Natural killer cell (primary cell): ENCODE measurements at regions of chr7 and their contacts with region 1.

Region 1: GRCh38 chr7:107879400-107880035 is 11.5 kb upstream of the DLD start:
- DNase-seq: peak in 1 of 2 donors; percentile 73
- ATAC-seq: peak; percentile 79 to 84 (median 83)
- H3K4me3 ChIP-seq: no peak overlapping the region
- H3K4me3 Mint-ChIP-seq: no peak overlapping the region
- H3K27ac ChIP-seq: no peak overlapping the region
- H3K27ac Mint-ChIP-seq: no peak overlapping the region
- H3K4me1 ChIP-seq: no peaks in the 10 kb centered on the region
- H3K4me1 Mint-ChIP-seq: peaks cover 0 to 2% of the 10 kb centered on the region in 2 donors
- H3K27me3 ChIP-seq: no peaks in the 10 kb centered on the region
- H3K27me3 Mint-ChIP-seq: peaks cover 18 to 32% of the 10 kb centered on the region in 2 donors
- CTCF ChIP-seq: peak; percentile 78

Region 2: GRCh38 chr7:106793015-106793975 is 1086.2 kb before region 1 on chr7:
- intact Hi-C with region 1: loop called (anchors 10 kb)
- DNase-seq: peak in 1 of 2 donors; percentile 82
- ATAC-seq: peak; percentile 57 to 73 (median 69)
- H3K4me3 ChIP-seq: no peak overlapping the region
- H3K4me3 Mint-ChIP-seq: no peak overlapping the region
- H3K27ac ChIP-seq: no peak overlapping the region
- H3K27ac Mint-ChIP-seq: no peak overlapping the region
- H3K4me1 ChIP-seq: no peaks in the 10 kb centered on the region
- H3K4me1 Mint-ChIP-seq: no peaks in the 10 kb centered on the region
- H3K27me3 ChIP-seq: no peaks in the 10 kb centered on the region
- H3K27me3 Mint-ChIP-seq: peaks cover 0 to 8% of the 10 kb centered on the region in 2 donors
- CTCF ChIP-seq: peak; percentile 85

Region 3: GRCh38 chr7:107201795-107202450 is 677.6 kb before region 1 on chr7:
- intact Hi-C with region 1: loop called (anchors 2 kb)
- DNase-seq: peak; percentile 18 to 56
- ATAC-seq: peak; percentile 41 to 68 (median 47)
- H3K4me3 ChIP-seq: no peak overlapping the region
- H3K4me3 Mint-ChIP-seq: no peak overlapping the region
- H3K27ac ChIP-seq: no peak overlapping the region
- H3K27ac Mint-ChIP-seq: no peak overlapping the region
- H3K4me1 ChIP-seq: no peaks in the 10 kb centered on the region
- H3K4me1 Mint-ChIP-seq: peaks cover 0 to 5% of the 10 kb centered on the region in 2 donors
- H3K27me3 ChIP-seq: no peaks in the 10 kb centered on the region
- H3K27me3 Mint-ChIP-seq: no peaks in the 10 kb centered on the region
- CTCF ChIP-seq: no peak

Region 4: GRCh38 chr7:107462740-107463444 is 416.6 kb before region 1 on chr7:
- intact Hi-C with region 1: loop called (anchors 1 kb)
- DNase-seq: peak; percentile 19 to 77
- ATAC-seq: peak; percentile 64 to 78 (median 67)
- H3K4me3 ChIP-seq: no peak overlapping the region
- H3K4me3 Mint-ChIP-seq: no peak overlapping the region
- H3K27ac ChIP-seq: no peak overlapping the region
- H3K27ac Mint-ChIP-seq: no peak overlapping the region
- H3K4me1 ChIP-seq: no peaks in the 10 kb centered on the region
- H3K4me1 Mint-ChIP-seq: no peaks in the 10 kb centered on the region
- H3K27me3 ChIP-seq: no peaks in the 10 kb centered on the region
- H3K27me3 Mint-ChIP-seq: no peaks in the 10 kb centered on the region
- CTCF ChIP-seq: peak; percentile 30

Region 5: DNA sequence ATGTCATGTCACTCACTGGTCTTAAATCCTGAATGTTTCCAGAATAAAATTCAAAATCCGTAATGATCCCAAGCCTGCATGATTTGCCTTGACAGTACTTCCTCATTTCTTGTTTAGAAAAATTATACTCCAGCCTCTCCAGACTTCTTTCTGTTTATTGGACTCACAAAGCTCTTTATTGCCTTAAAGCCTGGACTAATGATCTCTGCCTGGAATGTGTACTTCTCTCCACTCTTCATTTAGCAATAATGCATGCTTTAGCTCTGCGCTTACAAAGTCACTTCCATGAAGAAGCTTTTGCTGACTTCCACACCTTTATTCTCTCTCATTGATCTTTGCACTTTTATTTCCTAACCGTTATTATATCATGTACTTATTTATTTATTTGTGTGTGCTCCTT is 49.1 kb before region 1 on chr7:
- intact Hi-C with region 1: no loop called
- DNase-seq: no peak
- ATAC-seq: no peak
- H3K4me3 ChIP-seq: no peak overlapping the region
- H3K4me3 Mint-ChIP-seq: no peak overlapping the region
- H3K27ac ChIP-seq: no peak overlapping the region
- H3K27ac Mint-ChIP-seq: no peak overlapping the region
- H3K4me1 ChIP-seq: no peaks in the 10 kb centered on the region
- H3K4me1 Mint-ChIP-seq: no peaks in the 10 kb centered on the region
- H3K27me3 ChIP-seq: no peaks in the 10 kb centered on the region
- H3K27me3 Mint-ChIP-seq: peaks cover 12 to 17% of the 10 kb centered on the region in 2 donors
- CTCF ChIP-seq: no peak

Region 6: GRCh38 chr7:107856806-107857540 is 22.5 kb before region 1 on chr7:
- intact Hi-C with region 1: no loop called
- DNase-seq: peak in 1 of 2 donors; percentile 60
- ATAC-seq: peak; percentile 71 to 90 (median 77)
- H3K4me3 ChIP-seq: no peak overlapping the region
- H3K4me3 Mint-ChIP-seq: peak overlapping the region; percentile 68
- H3K27ac ChIP-seq: peak overlapping the region; percentile 71
- H3K27ac Mint-ChIP-seq: peak overlapping the region; percentile 66 to 77
- H3K4me1 ChIP-seq: peaks cover 21% of the 10 kb centered on the region
- H3K4me1 Mint-ChIP-seq: peaks cover 27 to 46% of the 10 kb centered on the region in 2 donors
- H3K27me3 ChIP-seq: no peaks in the 10 kb centered on the region
- H3K27me3 Mint-ChIP-seq: no peaks in the 10 kb centered on the region
- CTCF ChIP-seq: no peak